ENCODE measurements at regions of chr6 and their contacts with region 1.

Region 1: DNA sequence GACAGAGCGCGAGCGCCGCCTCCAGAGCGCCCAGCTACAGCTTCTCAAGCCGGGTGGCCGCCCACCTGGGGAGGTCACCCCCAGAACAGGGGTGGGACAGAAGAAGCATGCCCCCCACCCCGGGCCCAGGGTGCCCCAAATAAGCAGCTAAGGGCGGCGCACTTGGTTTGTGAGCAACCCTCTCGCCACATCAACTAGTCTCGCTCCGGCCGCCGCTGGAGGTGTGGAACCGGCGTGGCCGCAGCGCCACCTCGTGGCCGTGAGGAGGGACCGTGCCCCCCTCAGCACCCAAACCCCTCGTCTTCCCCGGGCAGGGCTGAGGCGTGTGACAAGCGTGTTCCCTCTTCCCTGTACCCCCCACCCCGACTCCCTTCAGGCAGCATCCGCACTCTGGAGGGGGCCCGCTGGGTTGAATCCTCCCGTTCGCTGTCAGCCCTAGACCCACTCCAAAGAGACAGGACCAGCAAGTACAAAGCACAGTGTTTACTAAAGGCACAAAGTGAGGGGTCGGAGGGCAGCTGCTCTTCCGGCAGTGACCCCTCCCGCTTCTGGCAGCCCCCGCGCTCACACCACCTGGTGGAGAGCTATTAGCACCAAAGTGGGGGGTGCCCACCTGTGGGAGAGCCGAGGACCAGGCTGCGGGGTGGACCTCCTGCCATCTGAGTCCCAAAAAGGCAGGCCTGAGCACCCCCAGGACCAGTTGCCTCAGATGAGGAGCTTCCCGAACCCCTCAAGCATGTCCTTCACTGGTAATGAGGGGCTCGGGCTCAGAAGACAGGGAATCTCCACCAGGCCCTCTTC is 45.4 kb downstream of the MDFI start:
- DNase-seq: peak; percentile 72 to 95 (median 89)

Region 2: GRCh38 chr6:41367700-41368099 is 316.0 kb before region 1 on chr6:
- intact Hi-C with region 1: loop called (anchors 2 kb)
- DNase-seq: peak; percentile 32 to 87 (median 74)

Region 3: DNA sequence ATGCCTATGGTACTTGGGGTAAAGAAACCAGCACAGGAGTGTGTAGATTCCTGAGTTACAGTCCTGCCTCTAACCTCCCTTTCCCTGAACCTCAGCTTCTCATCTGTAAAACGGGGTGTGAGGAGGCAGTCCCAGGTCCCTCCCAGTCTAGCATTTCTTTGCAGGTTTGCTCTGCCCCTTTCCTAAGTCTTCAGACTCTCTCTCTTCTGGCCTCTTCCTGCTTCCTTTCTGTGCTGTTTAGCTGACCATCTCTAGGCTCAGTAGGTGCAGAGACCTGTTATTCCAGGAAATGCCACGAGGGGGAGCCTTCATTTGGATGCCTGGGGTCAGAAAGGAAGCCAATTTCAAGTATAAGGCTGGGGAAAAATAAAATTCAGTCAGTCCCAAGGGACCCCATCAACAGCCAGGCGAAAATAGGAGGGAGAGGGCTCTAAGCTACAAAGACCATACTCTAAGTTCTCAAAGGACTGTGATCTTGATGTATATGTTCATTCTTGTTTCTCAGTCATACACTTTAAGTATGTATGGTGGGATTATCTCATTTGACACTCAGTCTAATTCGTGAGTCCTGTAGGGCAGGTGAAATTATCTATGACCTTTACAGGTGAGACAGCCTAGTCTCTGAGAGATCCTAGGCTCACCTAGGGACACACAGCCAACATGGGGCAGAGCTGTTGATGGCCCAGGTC is 259.2 kb before region 1 on chr6:
- intact Hi-C with region 1: loop called (anchors 10 kb)
- DNase-seq: peak; percentile 38 to 97 (median 91)

Region 4: DNA sequence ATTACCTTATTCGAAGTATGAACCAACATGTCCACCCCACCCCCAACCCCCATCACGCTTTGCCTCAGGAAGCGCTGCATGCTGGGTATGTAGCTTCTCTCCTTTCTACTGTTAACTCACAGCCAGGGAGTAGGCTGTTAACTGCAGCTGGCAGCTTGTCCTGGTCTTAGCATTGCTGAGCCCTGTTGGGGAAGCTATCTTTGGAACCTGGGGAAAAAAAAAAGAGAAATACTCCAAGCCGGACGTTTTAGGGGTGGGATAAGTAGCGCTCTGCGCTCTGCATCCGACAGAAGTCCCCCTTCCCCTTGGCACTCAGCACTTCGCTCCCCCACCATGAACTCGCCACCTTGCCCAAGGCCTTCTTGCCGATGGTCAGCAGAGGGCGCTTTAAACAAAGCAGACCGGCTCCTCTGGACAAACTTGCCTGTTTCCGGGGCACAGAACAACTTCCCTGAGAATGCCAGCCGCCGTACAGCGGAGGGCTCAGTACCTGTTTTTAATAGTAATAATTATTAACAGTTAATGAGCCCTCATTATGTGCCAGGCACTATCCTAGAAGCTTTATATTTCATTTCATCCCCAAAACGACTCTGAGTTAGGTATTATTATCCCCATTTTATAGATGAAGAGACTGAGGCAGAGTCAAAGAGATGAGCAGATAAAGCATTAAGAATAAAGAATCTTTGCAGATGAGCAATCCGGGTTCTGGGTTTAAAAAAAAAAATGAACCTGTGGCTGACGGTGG is 80.7 kb before region 1 on chr6:
- intact Hi-C with region 1: loop called (anchors 1 kb)
- DNase-seq: peak; percentile 68 to 94 (median 86)

Region 5: GRCh38 chr6:42118162-42119001 is 434.7 kb after region 1 on chr6:
- intact Hi-C with region 1: no loop called
- DNase-seq: peak in 11 of 42 donors; percentile 10 to 45 (median 24)